ENCODE measurements at regions of chr18 and their contacts with region 1.

Region 1: GRCh38 chr18:33567705-33568104 is 10.3 kb upstream of the ASXL3 start:
- DNase-seq: no peak
- H3K4me3 ChIP-seq: no peak overlapping the region
- H3K27ac ChIP-seq: no peak overlapping the region
- H3K4me1 ChIP-seq: no peaks in the 10 kb centered on the region
- H3K27me3 ChIP-seq: no peaks in the 10 kb centered on the region
- CTCF ChIP-seq: no peak
- POLR2A ChIP-seq: no peak

Region 2: GRCh38 chr18:33404244-33404873 is 163.3 kb before region 1 on chr18:
- intact Hi-C with region 1: no loop called
- DNase-seq: no peak
- H3K4me3 ChIP-seq: no peak overlapping the region
- H3K27ac ChIP-seq: no peak overlapping the region
- H3K4me1 ChIP-seq: no peaks in the 10 kb centered on the region
- H3K27me3 ChIP-seq: no peaks in the 10 kb centered on the region
- CTCF ChIP-seq: no peak
- POLR2A ChIP-seq: no peak

Region 3: DNA sequence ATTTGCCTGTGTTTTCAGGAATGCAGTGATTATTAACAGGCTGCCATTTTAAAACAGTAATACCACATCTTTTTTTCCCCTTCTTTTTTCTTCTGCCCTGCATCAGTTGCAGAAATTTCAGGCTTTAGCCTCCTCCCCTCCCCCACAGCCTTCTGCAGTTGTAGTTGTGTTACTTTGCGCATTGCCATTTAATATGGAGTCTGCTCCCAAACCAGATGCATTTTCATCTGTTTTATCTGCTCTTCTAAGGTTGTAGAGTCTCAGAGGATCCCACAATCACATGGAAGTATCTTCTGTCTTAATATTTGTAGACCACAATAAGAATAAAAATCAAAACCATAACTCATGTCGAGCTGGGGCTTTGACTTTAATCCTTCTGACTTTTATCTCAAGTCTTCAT is 14.2 kb after region 1 on chr18:
- intact Hi-C with region 1: loop called (anchors 2 kb)
- DNase-seq: no peak
- H3K4me3 ChIP-seq: no peak overlapping the region
- H3K27ac ChIP-seq: no peak overlapping the region
- H3K4me1 ChIP-seq: no peaks in the 10 kb centered on the region
- H3K27me3 ChIP-seq: peaks cover 0 to 7% of the 10 kb centered on the region in 2 donors
- CTCF ChIP-seq: no peak
- POLR2A ChIP-seq: no peak

Measured in breast epithelium (tissue), 4 donors.